ENCODE measurements at regions of chr15 and their contacts with region 1.

Region 1: GRCh38 chr15:38474155-38474757 is 20.3 kb downstream of the FAM98B start:
- DNase-seq: peak; percentile 67
- H3K4me3 ChIP-seq: no peak overlapping the region
- CTCF ChIP-seq: peak; percentile 77

Region 2: GRCh38 chr15:38547255-38547997 is 73.2 kb after region 1 on chr15:
- CTCF ChIA-PET with region 1: interaction called, 24 read pairs
- POLR2A ChIA-PET with region 1: no interaction called
- DNase-seq: no peak
- H3K4me3 ChIP-seq: no peak overlapping the region
- CTCF ChIP-seq: no peak

Region 3: GRCh38 chr15:38647683-38648082 is 173.4 kb after region 1 on chr15:
- CTCF ChIA-PET with region 1: interaction called, 13 read pairs
- POLR2A ChIA-PET with region 1: no interaction called
- DNase-seq: no peak
- H3K4me3 ChIP-seq: no peak overlapping the region
- CTCF ChIP-seq: peak; percentile 27

Region 4: GRCh38 chr15:38683382-38684242 is 209.4 kb after region 1 on chr15:
- CTCF ChIA-PET with region 1: interaction called, 102 read pairs
- POLR2A ChIA-PET with region 1: interaction called, 3 read pairs
- DNase-seq: no peak
- H3K4me3 ChIP-seq: no peak overlapping the region
- CTCF ChIP-seq: peak; percentile 65

Region 5: DNA sequence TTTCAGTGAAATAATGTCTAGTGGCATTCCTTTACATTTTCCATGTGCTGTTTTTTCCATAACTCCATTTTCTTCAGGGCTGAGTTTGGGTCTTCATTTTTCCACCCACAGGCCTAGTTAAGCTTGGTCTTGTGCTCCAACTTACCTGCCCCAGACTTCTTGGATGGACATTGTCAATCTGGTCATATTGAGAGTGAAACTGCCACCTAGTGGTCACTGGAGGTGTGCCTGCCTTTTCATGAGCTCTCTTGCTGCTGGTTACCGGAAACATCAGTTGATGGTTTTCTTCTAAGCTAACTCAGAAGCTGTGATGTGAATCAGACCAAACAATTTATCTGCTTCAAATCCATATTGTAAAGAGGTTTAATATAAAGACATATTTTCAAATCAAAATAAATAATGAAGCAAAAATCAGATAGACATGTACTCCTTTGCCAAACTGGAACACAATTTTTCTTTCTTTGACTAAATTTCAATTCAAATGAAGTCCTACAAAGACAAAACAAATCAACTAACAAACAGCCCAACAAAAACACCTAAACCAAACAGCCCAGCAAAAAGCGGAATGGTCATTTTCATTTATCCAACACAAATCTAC is 225.5 kb after region 1 on chr15:
- CTCF ChIA-PET with region 1: interaction called, 58 read pairs
- POLR2A ChIA-PET with region 1: no interaction called
- DNase-seq: no peak
- H3K4me3 ChIP-seq: no peak overlapping the region
- CTCF ChIP-seq: peak; percentile 79

Measured in AG04449 (cell line).